HepG2 (cell line): ENCODE measurements at regions of chr17 and their contacts with region 1.

Region 1: DNA sequence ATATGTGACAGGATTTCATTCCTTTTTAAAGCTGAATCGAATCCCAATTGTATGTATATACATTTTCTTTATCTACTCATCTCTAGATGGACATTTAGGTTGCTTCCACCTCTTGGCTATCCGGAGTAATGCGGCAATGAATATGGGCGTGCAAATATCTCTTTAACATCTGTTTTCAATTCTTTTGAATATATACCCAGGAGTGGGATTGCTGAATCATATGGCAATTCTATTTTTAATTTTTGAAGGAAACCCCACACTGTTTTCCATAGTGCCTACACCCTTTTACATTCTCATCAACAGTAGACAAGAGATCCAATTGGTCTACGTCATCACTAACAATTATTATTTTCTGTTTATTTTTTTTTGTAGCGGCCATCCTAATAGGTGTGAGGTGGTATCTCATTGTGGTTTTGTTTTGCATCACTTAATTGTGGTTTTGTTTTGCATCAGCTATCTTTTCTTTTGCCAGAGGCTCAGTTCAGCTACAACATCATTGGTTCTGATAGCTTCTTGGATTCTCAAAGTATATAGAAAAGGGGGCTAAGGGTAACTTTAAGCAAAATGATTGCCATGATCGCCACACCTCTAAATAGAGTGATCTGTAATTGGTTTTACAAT is 25.6 kb upstream of the MAP2K6 start:
- DNase-seq: no peak
- ATAC-seq: no peak
- H3K4me3 ChIP-seq: no peak overlapping the region
- H3K27ac ChIP-seq: no peak overlapping the region
- H3K4me1 ChIP-seq: peaks cover 15% of the 10 kb centered on the region
- H3K27me3 ChIP-seq: no peaks in the 10 kb centered on the region
- CTCF ChIP-seq: no peak
- EP300 ChIP-seq: no peak
- POLR2A ChIP-seq: no peak
- RAD21 ChIP-seq: no peak

Region 2: DNA sequence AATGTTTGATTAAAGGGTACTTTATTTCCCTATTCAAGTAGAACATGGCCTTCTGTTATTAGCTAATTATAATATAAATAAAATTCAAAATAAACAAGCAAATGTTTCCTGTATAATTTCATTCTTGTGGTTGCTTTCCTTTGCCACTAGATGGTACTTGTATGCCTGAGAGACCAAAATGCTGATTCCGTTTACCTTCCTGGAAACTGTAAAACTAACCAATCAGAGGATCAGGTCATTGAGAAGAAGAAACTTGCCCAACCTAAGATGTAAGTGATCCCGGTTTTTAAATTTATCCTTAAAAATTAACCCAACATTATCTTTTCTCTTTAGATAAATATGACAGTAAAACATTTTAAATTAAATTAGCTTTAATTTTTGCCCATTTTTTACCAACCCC is 53.9 kb before region 1 on chr17:
- CTCF ChIA-PET with region 1: no interaction called
- POLR2A ChIA-PET with region 1: no interaction called
- in situ Hi-C with region 1: no loop called
- intact Hi-C with region 1: loop called (anchors 1 kb)
- DNase-seq: peak; percentile 46
- ATAC-seq: no peak
- H3K4me3 ChIP-seq: no peak overlapping the region
- H3K27ac ChIP-seq: no peak overlapping the region
- H3K4me1 ChIP-seq: no peaks in the 10 kb centered on the region
- H3K27me3 ChIP-seq: peaks cover 0 to 6% of the 10 kb centered on the region in 2 experiments; a peak in 1 of 5 replicates
- CTCF ChIP-seq: peak; percentile 53
- EP300 ChIP-seq: no peak
- POLR2A ChIP-seq: no peak
- RAD21 ChIP-seq: no peak

Region 3: GRCh38 chr17:69348436-69348835 is 40.5 kb before region 1 on chr17:
- CTCF ChIA-PET with region 1: no interaction called
- POLR2A ChIA-PET with region 1: no interaction called
- in situ Hi-C with region 1: no loop called
- intact Hi-C with region 1: no loop called
- DNase-seq: no peak
- ATAC-seq: peak; percentile 26; the same call in 1 of the 3 replicates
- H3K4me3 ChIP-seq: no peak overlapping the region
- H3K27ac ChIP-seq: no peak overlapping the region
- H3K4me1 ChIP-seq: no peaks in the 10 kb centered on the region
- H3K27me3 ChIP-seq: no peaks in the 10 kb centered on the region
- CTCF ChIP-seq: no peak
- EP300 ChIP-seq: no peak
- POLR2A ChIP-seq: no peak
- RAD21 ChIP-seq: no peak

Region 4: DNA sequence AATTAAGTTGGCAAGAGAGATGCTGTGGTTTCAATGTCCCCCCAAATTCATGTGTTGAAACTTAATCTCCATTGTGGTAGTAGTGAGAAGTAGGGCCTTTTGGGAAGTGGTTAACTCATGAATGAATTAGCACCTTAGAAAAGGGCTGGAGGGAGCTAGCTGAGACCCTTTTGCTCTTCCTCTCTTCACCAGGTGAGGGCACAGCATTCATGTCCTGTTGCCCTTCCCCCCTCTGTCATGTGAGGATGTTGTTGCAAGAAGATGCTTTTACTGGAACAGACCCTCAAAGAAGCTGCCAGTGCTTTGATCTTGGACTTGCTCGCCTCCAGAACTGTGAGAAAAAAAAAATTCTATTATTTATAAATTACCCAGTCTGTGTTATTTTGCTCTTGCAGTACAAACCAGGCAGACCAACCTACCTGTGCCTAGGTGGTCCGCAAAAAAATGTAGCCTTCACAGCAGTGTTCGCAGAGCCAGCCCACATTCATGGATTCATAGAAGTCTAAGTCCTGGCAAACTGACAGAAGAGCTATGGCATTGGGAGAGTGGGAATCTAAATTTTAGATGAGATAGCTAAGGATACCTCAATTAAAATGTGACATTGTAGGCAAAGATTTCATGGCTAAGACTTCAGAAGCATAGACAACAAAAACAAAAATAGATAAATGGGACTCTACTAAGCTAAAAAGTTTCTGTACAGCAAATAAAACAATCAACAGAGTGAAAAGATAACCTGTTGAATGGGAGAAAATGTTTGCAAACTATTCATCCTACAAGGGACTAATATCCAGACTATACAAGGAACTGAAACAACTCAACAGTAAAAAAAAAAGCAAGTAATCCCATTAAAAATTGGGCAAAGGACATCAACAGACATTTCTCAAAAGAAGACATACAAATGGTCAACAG is 30.0 kb before region 1 on chr17:
- CTCF ChIA-PET with region 1: no interaction called
- POLR2A ChIA-PET with region 1: no interaction called
- in situ Hi-C with region 1: no loop called
- intact Hi-C with region 1: loop called (anchors 1 kb)
- DNase-seq: peak; percentile 44
- ATAC-seq: peak; percentile 86
- H3K4me3 ChIP-seq: no peak overlapping the region
- H3K27ac ChIP-seq: no peak overlapping the region
- H3K4me1 ChIP-seq: no peaks in the 10 kb centered on the region
- H3K27me3 ChIP-seq: no peaks in the 10 kb centered on the region
- CTCF ChIP-seq: peak; percentile 70
- EP300 ChIP-seq: no peak
- POLR2A ChIP-seq: no peak
- RAD21 ChIP-seq: no peak

Region 5: GRCh38 chr17:69501591-69502468 is 112.9 kb after region 1 on chr17:
- CTCF ChIA-PET with region 1: no interaction called
- POLR2A ChIA-PET with region 1: no interaction called
- in situ Hi-C with region 1: no loop called
- intact Hi-C with region 1: loop called (anchors 5 kb)
- DNase-seq: peak; percentile 78
- ATAC-seq: peak; percentile 96
- H3K4me3 ChIP-seq: peak overlapping the region; percentile 43 to 64 (median 57)
- H3K27ac ChIP-seq: peak overlapping the region; percentile 44
- H3K4me1 ChIP-seq: peaks cover 24% of the 10 kb centered on the region
- H3K27me3 ChIP-seq: no peaks in the 10 kb centered on the region
- CTCF ChIP-seq: no peak
- EP300 ChIP-seq: no peak
- POLR2A ChIP-seq: peak in 1 of 2 experiments; percentile 34; a peak in 1 of 4 replicates
- RAD21 ChIP-seq: no peak